ENCODE measurements at regions of chr2 and their contacts with region 1.

Region 1: DNA sequence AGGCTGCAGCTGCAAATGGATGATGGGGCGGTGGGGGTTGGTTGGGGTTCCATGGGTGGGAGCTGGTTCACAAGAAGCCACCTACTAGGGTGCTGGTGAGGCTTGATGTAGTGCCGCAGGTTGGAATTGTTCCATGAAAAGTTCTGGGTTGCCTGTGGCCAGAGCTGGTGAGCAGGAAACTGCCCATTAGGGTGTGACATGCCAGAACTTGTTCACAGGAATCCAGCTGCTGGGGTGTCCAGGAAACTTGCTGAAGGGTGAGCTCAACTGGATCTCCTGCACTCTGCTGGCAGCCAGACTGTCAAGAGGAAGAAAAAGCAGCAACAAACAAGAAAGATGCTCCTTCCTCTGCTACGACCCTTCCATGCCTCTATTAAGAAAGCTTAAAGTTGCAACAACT is 48.8 kb downstream of the MAP3K20 start:
- DNase-seq: no peak
- H3K4me3 ChIP-seq: no peak overlapping the region
- H3K27ac ChIP-seq: no peak overlapping the region
- H3K4me1 ChIP-seq: peaks cover 0 to 16% (median 4%) of the 10 kb centered on the region in 4 experiments
- H3K27me3 ChIP-seq: no peaks in the 10 kb centered on the region

Region 2: DNA sequence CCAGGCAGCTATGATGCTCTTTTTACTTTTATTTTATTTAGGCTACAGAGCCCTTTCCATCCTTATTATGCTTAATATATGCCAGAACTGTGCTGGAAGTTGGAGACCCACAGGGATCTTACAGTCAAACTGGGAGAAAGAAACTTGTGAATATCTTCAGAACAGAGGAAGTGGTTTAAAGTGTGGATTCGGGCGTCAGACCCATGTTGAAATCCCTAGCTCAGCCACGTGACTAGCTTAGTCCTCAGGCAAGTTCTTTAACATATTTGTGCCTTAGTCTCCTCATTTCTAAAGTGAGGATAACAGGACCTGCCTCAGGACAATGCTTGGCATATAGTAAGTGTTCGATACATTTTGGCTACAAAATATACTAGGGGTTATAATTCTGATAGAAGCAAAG is 10.3 kb after region 1 on chr2:
- CTCF ChIA-PET with region 1: interaction called, 13 read pairs
- POLR2A ChIA-PET with region 1: no interaction called
- DNase-seq: peak in 2 of 3 donors; percentile 40 to 50
- H3K4me3 ChIP-seq: no peak overlapping the region
- H3K27ac ChIP-seq: no peak overlapping the region
- H3K4me1 ChIP-seq: peaks cover 0 to 21% (median 11%) of the 10 kb centered on the region in 4 experiments
- H3K27me3 ChIP-seq: no peaks in the 10 kb centered on the region

Measured in common myeloid progenitor, CD34-positive (primary cell).